Panc1 (cell line): ENCODE measurements at regions of chr3 and their contacts with region 1.

Region 1: GRCh38 chr3:186979837-186980236 is 49.5 kb downstream of the ST6GAL1 start:
- DNase-seq: no peak
- ATAC-seq: no peak
- H3K4me3 ChIP-seq: no peak overlapping the region
- H3K27ac ChIP-seq: no peak overlapping the region
- H3K4me1 ChIP-seq: no peaks in the 10 kb centered on the region
- H3K27me3 ChIP-seq: no peaks in the 10 kb centered on the region
- CTCF ChIP-seq: no peak

Region 2: GRCh38 chr3:186746008-186746407 is 233.8 kb before region 1 on chr3:
- CTCF ChIA-PET with region 1: no interaction called
- POLR2A ChIA-PET with region 1: interaction called, 11 read pairs
- in situ Hi-C with region 1: no loop called
- intact Hi-C with region 1: no loop called
- DNase-seq: no peak
- ATAC-seq: no peak
- H3K4me3 ChIP-seq: no peak overlapping the region
- H3K27ac ChIP-seq: no peak overlapping the region
- H3K4me1 ChIP-seq: no peaks in the 10 kb centered on the region
- H3K27me3 ChIP-seq: no peaks in the 10 kb centered on the region
- CTCF ChIP-seq: no peak